Right ventricle myocardium inferior (tissue), 1 donor: ENCODE measurements at regions of chr5 and their contacts with region 1.

Region 1: GRCh38 chr5:134586866-134587524 is 45.6 kb downstream of the SAR1B start:
- DNase-seq: peak; percentile 92
- ATAC-seq: peak; percentile 85

Region 2: DNA sequence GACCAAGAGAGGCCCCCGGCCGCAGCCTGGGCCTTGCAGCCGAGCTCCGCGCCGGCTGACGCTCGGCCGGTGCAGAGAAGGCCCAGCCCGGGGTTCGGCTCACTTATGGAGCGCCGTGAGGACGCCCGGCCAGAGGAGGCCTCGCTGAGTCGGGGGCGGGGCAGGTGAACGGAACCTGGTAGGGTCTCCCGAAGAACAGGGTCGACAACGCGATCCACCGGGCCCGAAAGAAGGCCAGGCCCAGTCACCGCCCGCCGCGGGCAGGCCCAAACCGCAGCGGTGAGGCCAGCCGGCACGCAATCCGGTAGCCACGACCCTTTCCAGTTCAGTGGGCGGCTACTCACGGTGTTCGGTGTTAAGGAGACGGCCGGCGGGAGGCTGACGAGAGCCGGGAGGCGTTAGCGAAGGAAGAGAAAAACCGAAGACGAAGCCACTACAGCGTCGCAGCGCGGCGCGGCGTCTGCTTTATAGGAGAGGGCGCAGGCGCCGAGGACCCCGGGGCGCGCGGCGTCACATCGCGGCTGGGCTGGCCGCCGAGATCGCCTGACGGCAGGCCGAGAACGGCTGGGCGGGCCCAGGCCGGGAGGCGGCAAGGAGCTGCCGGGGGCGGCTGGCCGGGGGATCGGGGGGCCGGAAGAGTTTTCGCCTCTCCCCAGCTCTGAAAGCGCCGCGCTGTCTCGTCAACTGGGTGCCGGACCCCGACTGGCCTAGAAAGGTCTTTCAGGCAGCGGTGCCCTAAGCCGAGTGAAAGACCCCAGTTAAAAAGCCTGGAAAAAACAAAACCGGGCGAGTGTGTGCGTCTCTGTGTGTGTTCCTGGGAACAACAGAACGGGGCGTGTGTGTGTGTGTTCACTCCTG is 410.3 kb before region 1 on chr5 and contains the start of gene SKP1:
- intact Hi-C with region 1: loop called (anchors 10 kb)
- DNase-seq: peak; percentile 94
- ATAC-seq: peak; percentile 92
- total RNA-seq, gene SKP1: 458 TPM

Region 3: GRCh38 chr5:134304311-134304710 is 282.7 kb before region 1 on chr5:
- intact Hi-C with region 1: loop called (anchors 2 kb)
- DNase-seq: no peak
- ATAC-seq: no peak

Region 4: DNA sequence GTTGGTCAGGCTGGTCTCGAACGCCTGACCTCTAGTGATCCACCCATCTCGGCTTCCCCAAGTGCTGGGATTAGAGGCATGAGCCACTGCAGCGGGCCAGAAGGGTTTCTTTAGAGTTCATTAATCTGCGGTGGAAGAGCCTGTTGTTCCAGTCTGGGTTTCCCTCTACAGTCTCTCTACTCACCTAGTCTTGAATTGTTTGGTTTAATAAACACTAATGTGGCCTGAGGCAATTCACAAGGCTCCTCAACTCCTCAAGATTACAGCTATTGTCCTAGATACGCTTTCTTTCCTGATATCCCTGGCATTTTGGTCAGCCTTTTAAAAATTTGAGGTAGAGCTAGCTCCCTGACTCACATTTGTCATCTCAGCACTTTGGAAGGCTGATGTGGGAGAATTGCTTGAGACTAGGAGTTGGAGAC is 50.2 kb after region 1 on chr5:
- intact Hi-C with region 1: no loop called
- DNase-seq: no peak
- ATAC-seq: no peak